PC-3 (cell line): ENCODE measurements at regions of chr19 and their contacts with region 1.

Region 1: GRCh38 chr19:44113138-44113783 is at the start of gene ZNF225:
- DNase-seq: peak; percentile 97
- ATAC-seq: peak; percentile 98
- H3K4me3 ChIP-seq: peak within 1 kb of the TSS; percentile 99
- H3K27ac ChIP-seq: no peak within 1 kb of the TSS
- H3K4me1 ChIP-seq: peaks cover 9% of the 10 kb centered on the region
- H3K27me3 ChIP-seq: no peaks in the 10 kb centered on the region
- CTCF ChIP-seq: no peak
- total RNA-seq, gene ZNF225: 0.46 and 1.6 TPM in 2 replicates

Region 2: GRCh38 chr19:44002566-44003460 is 110.4 kb before region 1 on chr19 and contains the start of gene ZNF230:
- CTCF ChIA-PET with region 1: no interaction called
- POLR2A ChIA-PET with region 1: no interaction called
- intact Hi-C with region 1: loop called (anchors 1 kb)
- DNase-seq: peak; percentile 93
- ATAC-seq: peak; percentile 97
- H3K4me3 ChIP-seq: peak within 1 kb of the TSS; percentile 81
- H3K27ac ChIP-seq: no peak within 1 kb of the TSS
- H3K4me1 ChIP-seq: no peaks in the 10 kb centered on the region
- H3K27me3 ChIP-seq: no peaks in the 10 kb centered on the region
- CTCF ChIP-seq: no peak
- total RNA-seq, gene ZNF230: 0.52 and 1.0 TPM in 2 replicates

Region 3: DNA sequence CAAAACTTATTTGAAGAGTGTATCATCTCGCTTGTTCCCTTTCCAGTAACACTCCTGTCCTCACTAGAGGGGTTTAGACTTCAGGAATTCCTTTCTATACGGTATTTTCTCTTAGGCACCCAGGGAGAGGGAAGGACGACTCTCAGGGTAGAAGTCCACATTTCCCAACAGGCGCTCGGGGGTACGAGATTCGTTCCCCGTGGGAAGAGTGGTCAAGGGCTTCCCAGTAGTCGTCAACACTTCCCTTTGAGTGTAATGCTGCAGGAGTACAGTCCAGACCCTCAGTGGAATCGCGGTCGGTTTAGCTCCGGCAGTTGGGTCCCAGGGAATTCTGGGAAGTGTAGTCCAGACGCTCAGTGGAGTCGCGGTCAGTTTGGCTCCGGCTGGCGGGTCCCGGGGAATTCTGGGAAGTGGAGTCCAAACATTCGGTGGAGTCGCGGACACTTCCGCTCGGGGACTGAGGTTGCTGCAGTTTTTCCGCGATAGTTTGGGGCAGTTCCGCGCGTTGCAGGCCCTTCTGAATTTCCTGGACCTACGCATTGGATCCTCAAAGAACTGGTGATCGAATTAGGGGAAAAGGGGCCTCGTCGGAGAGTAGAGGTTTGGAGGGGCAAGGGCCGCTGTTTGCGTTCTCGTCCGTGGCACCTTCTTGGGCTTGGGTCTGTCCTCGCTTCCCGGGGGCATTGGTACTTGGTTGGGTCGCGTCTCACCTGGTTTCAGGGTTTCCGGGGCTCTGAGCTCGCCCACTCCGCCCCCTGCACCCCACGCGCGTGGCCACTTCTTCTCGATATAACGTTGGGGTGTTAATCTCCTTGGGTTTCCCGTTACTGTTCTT is 19.1 kb before region 1 on chr19 and contains the start of gene ZNF224:
- CTCF ChIA-PET with region 1: no interaction called
- POLR2A ChIA-PET with region 1: no interaction called
- intact Hi-C with region 1: loop called (anchors 1 kb)
- DNase-seq: peak; percentile 85
- ATAC-seq: peak; percentile 97
- H3K4me3 ChIP-seq: peak within 1 kb of the TSS; percentile 97
- H3K27ac ChIP-seq: no peak within 1 kb of the TSS
- H3K4me1 ChIP-seq: no peaks in the 10 kb centered on the region
- H3K27me3 ChIP-seq: no peaks in the 10 kb centered on the region
- CTCF ChIP-seq: no peak
- total RNA-seq, gene ZNF224: 5.6 and 11.0 TPM in 2 replicates

Region 4: GRCh38 chr19:44212250-44212865 is 99.1 kb after region 1 on chr19 and contains the start of gene ZNF227:
- CTCF ChIA-PET with region 1: no interaction called
- POLR2A ChIA-PET with region 1: no interaction called
- intact Hi-C with region 1: loop called (anchors 2 kb)
- DNase-seq: peak; percentile 92
- ATAC-seq: peak; percentile 97
- H3K4me3 ChIP-seq: peak within 1 kb of the TSS; percentile 90
- H3K27ac ChIP-seq: peak within 1 kb of the TSS; percentile 48
- H3K4me1 ChIP-seq: peaks cover 7% of the 10 kb centered on the region; the same call in 1 of the 2 replicates
- H3K27me3 ChIP-seq: no peaks in the 10 kb centered on the region
- CTCF ChIP-seq: no peak
- total RNA-seq, gene ZNF227: 4.9 and 8.7 TPM in 2 replicates